ENCODE measurements at regions of chr17 and their contacts with region 1.

Region 1: GRCh38 chr17:43524945-43525575 is 21.1 kb downstream of the ETV4 start:
- DNase-seq: no peak
- ATAC-seq: no peak
- H3K4me3 ChIP-seq: no peak overlapping the region
- H3K27ac ChIP-seq: peak overlapping the region in 2 of 12 donors; percentile 38 to 51
- H3K4me1 ChIP-seq: peaks cover 2 to 28% (median 13%) of the 10 kb centered on the region in 12 donors
- H3K27me3 ChIP-seq: no peaks in the 10 kb centered on the region
- CTCF ChIP-seq: no peak
- POLR2A ChIP-seq: no peak

Region 2: DNA sequence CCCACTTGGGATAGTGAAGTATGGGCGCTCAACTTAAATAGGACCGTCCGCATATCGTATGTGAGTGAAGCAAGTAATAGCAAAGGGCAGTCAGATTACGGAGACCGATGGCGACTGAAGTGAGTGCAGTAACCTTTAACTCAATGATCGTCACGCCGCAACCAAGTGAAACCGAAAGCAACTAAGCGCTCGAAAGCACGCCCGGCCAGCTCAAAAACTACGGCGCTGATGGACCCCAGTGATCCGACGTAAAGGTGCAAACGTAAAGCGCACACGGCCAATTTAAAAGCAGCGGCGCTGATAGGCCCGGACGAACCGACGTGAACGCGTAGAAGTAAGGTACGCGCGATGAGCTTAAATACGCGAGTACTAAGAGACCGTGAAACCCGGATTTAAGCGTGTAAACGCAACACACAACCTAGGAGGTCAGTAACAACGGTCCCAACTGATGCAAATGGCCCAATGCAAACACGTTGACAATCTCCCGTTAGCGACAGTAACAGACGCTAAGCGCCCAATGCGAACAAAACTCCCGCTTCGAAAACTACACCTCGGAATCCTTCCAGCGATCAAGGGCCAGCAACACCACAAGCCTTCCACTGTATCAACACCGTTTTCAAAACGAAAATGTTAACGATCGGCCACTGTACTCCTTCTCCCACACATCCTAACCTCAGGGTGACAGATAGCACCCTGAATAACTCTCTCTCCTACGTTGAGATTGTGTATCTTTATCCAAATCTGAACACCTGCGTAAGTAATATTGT is 164.1 kb before region 1 on chr17:
- intact Hi-C with region 1: no loop called
- DNase-seq: peak; percentile 90 to 93 (median 90)
- ATAC-seq: peak; percentile 87 to 93 (median 90)
- H3K4me3 ChIP-seq: peak overlapping the region; percentile 24 to 73 (median 59)
- H3K27ac ChIP-seq: peak overlapping the region; percentile 90 to 99 (median 96)
- H3K4me1 ChIP-seq: peaks cover 0 to 18% (median 10%) of the 10 kb centered on the region in 12 donors
- H3K27me3 ChIP-seq: no peaks in the 10 kb centered on the region
- CTCF ChIP-seq: no peak
- POLR2A ChIP-seq: peak; percentile 10 to 97

Region 3: DNA sequence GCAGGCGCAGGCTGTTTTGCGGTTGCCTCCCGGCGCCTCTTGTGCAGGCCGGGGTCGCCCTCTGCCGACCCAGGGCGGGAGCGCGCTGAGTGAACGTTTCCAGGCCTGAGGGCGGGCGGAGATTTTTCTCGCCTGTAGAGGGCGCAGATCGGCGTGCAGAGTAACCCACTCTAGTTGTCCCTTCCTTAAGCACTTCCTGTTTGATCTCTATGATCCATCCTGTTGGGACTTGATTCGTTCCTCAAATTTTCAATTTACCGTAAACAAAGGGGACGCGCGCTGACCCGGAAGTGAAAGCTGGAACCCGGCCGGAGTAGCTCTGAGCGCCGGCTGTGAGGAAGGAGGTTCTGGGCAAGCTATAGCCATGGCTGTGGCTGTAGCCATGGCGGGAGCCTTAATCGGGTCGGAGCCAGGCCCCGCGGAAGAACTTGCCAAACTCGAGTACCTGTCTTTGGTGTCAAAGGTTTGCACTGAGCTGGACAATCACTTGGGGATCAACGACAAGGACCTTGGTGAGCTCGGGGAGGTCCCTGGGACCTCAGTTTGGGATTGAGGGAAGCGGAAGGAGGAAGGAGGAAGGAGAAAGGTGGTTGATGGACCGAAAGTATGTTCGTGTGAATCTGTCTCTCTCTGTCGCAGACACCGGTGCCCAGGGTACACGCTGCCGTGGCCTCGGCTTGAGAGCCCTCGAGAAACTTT is 41.2 kb before region 1 on chr17 and contains the start of gene DHX8:
- intact Hi-C with region 1: no loop called
- DNase-seq: peak; percentile 97 to 99 (median 97)
- ATAC-seq: peak; percentile 99
- H3K4me3 ChIP-seq: peak within 1 kb of the TSS; percentile 58 to 91 (median 77)
- H3K27ac ChIP-seq: peak within 1 kb of the TSS; percentile 54 to 93 (median 82)
- H3K4me1 ChIP-seq: peaks cover 0 to 41% (median 28%) of the 10 kb centered on the region in 12 donors
- H3K27me3 ChIP-seq: no peaks in the 10 kb centered on the region
- CTCF ChIP-seq: peak; percentile 100
- POLR2A ChIP-seq: peak in 1 of 2 donors; percentile 80
- total RNA-seq, gene DHX8: 22.7 to 41.0 (median 28.1) TPM

Region 4: DNA sequence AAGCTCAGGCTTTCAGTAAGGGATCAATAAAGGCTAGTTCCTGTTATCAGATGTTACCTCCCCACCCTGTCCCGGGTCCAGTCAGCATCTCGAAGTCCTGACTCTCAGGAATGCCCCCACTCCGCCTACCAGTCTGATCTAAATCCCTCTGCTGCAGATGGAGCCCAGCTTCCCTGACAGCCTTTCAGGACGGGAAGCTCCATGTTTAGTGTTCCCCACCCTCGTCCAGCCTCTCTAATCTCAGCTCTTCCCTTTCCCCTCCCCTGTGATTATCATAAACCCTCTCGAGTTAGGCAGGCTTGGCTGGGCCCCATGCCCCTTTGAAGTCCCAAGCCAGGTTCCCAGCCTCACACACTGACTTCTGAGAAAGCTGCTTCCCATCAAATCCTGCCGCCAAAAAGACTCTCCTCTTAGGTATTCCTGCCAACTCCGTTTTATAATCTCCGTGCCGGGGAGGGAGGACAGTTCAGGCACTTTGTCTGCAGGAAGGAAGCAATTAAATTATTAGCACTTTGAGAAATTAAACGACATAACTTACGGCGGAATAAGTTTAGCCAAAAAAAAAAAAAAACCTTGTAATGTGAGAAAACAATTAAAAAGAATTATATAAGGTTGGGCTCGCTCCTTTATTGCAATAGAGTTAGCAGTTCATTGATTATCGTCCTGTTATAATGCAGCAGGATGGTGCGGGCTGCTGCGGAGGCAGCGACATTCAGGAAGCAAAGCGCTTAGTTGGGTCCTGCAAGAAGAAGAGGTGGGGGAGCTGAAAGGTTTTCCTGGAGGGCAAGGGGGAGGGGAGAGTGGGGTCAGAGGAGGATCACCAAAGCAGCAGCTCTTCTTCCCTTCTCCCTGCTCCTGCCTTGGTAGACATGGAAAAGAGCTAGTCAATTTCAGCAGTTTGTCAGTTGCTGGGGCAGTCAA is 37.9 kb after region 1 on chr17:
- intact Hi-C with region 1: loop called in 2 of 10 experiments (anchors 5 kb)
- DNase-seq: no peak
- ATAC-seq: peak in 3 of 4 donors; percentile 22 to 39 (median 31)
- H3K4me3 ChIP-seq: no peak overlapping the region
- H3K27ac ChIP-seq: no peak overlapping the region
- H3K4me1 ChIP-seq: peaks cover 0 to 18% (median 8%) of the 10 kb centered on the region in 12 donors
- H3K27me3 ChIP-seq: peaks cover 0 to 18% (median 0%) of the 10 kb centered on the region in 9 donors
- CTCF ChIP-seq: no peak
- POLR2A ChIP-seq: no peak

Region 5: DNA sequence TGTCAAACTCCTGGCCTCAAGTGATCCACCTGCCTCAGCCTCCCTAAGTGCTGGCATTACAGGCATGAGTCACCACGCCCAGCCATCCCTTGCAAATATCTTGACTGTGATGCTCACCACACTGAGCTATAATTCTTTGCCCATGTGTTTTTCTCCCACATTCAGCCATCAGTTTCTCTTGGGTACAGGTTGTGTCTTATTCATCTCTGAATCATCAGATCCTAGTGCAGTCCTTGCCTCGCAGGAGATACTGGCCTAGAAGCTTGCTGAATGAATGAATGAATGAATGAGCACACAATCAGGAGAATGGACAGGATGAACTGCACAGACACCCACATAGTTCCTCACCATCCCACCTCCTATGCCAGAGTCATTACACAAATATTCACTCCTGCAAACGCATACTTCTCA is 45.5 kb after region 1 on chr17:
- intact Hi-C with region 1: loop called in 1 of 10 experiments (anchors 5 kb)
- DNase-seq: no peak
- ATAC-seq: no peak
- H3K4me3 ChIP-seq: no peak overlapping the region
- H3K27ac ChIP-seq: no peak overlapping the region
- H3K4me1 ChIP-seq: no peaks in the 10 kb centered on the region
- H3K27me3 ChIP-seq: no peaks in the 10 kb centered on the region
- CTCF ChIP-seq: no peak
- POLR2A ChIP-seq: no peak

Region 6: DNA sequence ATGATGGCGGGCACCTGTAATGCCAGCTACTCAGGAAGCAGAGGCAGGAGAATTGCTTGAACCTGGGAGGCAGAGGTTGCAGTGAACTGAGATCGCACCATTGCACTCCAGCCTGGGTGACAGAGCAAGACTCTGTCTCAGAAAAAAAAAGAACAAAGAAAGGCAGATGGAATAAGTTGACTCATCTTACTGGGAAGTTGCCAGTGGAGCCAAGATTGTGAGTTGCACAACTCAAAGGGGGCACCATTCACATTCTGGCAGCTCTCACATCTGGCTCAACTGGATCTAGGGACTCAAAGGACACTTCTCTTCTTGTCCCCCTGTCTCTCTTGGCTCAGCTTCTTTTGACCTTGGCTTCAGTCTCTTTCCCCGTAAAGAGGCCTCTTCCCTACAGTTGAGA is 74.8 kb after region 1 on chr17:
- intact Hi-C with region 1: no loop called
- DNase-seq: no peak
- ATAC-seq: peak in 1 of 4 donors; percentile 22
- H3K4me3 ChIP-seq: no peak overlapping the region
- H3K27ac ChIP-seq: no peak overlapping the region
- H3K4me1 ChIP-seq: peaks cover 0 to 23% (median 6%) of the 10 kb centered on the region in 12 donors
- H3K27me3 ChIP-seq: no peaks in the 10 kb centered on the region
- CTCF ChIP-seq: no peak
- POLR2A ChIP-seq: no peak

Region 7: GRCh38 chr17:43673516-43674323 is 148.7 kb after region 1 on chr17:
- intact Hi-C with region 1: loop called in 3 of 10 experiments (anchors 2 to 5 kb)
- DNase-seq: peak; percentile 60 to 78 (median 72)
- ATAC-seq: peak in 3 of 4 donors; percentile 61 to 72 (median 67)
- H3K4me3 ChIP-seq: no peak overlapping the region
- H3K27ac ChIP-seq: no peak overlapping the region
- H3K4me1 ChIP-seq: peaks cover 0 to 35% (median 12%) of the 10 kb centered on the region in 12 donors
- H3K27me3 ChIP-seq: no peaks in the 10 kb centered on the region
- CTCF ChIP-seq: peak; percentile 87 to 99 (median 96)
- POLR2A ChIP-seq: no peak

Measured in heart left ventricle (tissue), 16 donors.